ENCODE measurements at regions of chr19 and their contacts with region 1.

Region 1: DNA sequence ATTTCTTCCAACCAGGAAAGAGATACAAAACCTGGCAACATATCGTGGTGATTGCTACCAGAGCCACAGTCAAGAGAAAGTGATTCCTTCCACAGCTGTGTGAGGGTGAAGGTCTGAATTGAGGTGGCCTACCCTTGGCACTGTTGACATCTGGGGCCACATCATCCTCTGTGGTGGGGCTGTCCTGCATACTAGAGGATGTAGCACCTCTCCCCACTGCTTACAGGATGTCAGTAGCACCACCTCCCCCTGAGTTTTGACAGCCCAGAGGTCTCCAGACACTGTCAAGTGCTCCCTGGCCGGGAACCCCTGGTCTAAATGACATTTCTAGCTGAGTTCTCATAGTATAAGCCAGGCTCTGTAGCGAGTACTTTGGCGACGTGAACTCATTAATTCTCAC is 15.5 kb downstream of the PTGER1 start:
- DNase-seq: no peak
- H3K4me3 ChIP-seq: no peak overlapping the region
- H3K27ac ChIP-seq: no peak overlapping the region
- H3K4me1 ChIP-seq: no peaks in the 10 kb centered on the region
- H3K27me3 ChIP-seq: no peaks in the 10 kb centered on the region
- CTCF ChIP-seq: no peak

Region 2: DNA sequence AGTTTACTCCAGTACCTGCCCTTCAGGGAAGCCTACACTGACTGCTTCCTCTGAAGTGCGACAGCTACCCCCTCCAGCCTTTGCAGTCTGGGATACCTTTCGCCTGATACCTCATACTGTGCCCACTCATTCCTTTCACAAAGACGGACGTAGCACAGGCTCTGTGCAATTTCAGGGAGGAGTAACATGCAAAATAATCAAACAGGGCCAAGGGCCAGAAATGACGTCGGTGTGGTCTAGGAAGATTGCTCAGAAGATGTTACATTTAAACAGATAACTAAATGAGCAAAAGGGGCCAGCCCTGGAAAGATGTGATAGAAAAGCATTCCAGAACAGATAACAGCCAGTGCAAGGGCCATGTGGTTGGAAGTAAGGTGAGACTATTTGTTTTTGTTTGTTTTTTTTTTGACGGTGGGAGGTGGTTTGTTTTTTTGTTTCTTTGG is 34.0 kb before region 1 on chr19:
- CTCF ChIA-PET with region 1: no interaction called
- POLR2A ChIA-PET with region 1: no interaction called
- intact Hi-C with region 1: no loop called
- DNase-seq: no peak
- H3K4me3 ChIP-seq: no peak overlapping the region
- H3K27ac ChIP-seq: no peak overlapping the region
- H3K4me1 ChIP-seq: no peaks in the 10 kb centered on the region
- H3K27me3 ChIP-seq: no peaks in the 10 kb centered on the region
- CTCF ChIP-seq: no peak

Region 3: DNA sequence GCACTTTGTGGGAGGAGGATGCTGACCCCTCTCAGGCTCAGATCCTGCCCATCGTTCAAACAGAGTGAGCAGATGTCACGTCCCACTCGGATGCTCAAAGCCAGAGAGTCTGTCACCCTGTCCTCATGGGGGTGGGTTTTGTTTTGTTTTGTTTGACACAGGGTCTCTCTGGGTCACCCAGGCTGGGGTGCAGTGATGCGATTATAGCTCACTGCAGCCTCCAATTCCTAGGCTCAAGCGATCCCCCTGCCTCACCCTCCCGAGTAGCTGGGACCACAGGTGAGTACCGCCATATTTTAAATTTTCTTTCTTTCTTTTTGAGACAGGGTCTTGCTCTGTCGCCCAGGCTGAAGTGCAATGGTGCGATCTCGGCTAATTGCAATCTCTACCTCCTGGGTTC is 314.7 kb after region 1 on chr19:
- CTCF ChIA-PET with region 1: no interaction called
- POLR2A ChIA-PET with region 1: interaction called, 10 read pairs
- intact Hi-C with region 1: no loop called
- DNase-seq: no peak
- H3K4me3 ChIP-seq: no peak overlapping the region
- H3K27ac ChIP-seq: no peak overlapping the region
- H3K4me1 ChIP-seq: no peaks in the 10 kb centered on the region; the same call in 1 of the 2 replicates
- H3K27me3 ChIP-seq: no peaks in the 10 kb centered on the region
- CTCF ChIP-seq: no peak

Measured in PC-9 (cell line).